Panc1 (cell line): ENCODE measurements at regions of chr5 and their contacts with region 1.

Region 1: GRCh38 chr5:164013077-164013670 is 507.8 kb downstream of the MAT2B start:
- DNase-seq: peak; percentile 55
- ATAC-seq: peak; percentile 75
- H3K4me3 ChIP-seq: no peak overlapping the region
- H3K27ac ChIP-seq: no peak overlapping the region
- H3K4me1 ChIP-seq: no peaks in the 10 kb centered on the region
- H3K27me3 ChIP-seq: no peaks in the 10 kb centered on the region
- CTCF ChIP-seq: peak; percentile 67; the same call in 1 of the 2 replicates

Region 2: DNA sequence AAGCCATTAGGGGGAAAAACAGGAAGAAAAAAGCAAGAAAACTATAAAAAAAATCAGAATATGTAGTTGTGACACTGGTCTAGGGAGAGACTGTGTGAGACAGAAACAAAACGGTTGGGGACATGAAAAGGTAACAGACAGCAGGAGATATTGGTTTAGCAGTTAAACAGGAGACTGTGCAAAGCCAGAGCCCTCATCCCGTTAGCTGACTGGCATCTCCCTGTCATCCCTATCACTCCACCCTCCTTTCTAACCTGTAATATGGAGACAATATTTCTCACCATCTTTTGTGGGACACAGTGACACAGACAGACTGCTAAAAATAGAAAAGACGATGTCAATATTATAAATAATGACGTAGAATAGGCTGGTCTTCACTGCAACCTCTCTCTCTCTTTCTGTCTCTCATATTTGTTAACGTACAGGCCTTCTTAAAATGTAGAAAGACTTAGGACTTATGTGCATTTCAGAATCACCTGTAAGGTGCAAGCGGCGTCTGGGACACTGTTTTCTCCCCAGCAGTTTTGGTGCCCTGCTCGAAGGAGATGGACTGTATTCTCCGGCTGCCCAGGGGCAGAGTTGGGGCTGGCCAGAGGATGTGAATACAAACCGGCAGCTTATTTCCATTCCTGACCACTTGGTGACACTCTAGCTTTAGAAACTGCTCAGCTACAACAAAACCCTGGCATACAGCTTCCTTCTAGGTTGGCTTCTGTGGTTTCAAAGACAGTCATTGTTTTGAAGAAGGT is 317.2 kb before region 1 on chr5:
- CTCF ChIA-PET with region 1: interaction called, 3 read pairs
- POLR2A ChIA-PET with region 1: no interaction called
- in situ Hi-C with region 1: no loop called
- intact Hi-C with region 1: loop called (anchors 5 kb)
- DNase-seq: peak; percentile 42
- ATAC-seq: peak; percentile 98
- H3K4me3 ChIP-seq: no peak overlapping the region
- H3K27ac ChIP-seq: no peak overlapping the region
- H3K4me1 ChIP-seq: no peaks in the 10 kb centered on the region
- H3K27me3 ChIP-seq: no peaks in the 10 kb centered on the region; the same call in 1 of the 2 replicates
- CTCF ChIP-seq: peak; percentile 82

Region 3: DNA sequence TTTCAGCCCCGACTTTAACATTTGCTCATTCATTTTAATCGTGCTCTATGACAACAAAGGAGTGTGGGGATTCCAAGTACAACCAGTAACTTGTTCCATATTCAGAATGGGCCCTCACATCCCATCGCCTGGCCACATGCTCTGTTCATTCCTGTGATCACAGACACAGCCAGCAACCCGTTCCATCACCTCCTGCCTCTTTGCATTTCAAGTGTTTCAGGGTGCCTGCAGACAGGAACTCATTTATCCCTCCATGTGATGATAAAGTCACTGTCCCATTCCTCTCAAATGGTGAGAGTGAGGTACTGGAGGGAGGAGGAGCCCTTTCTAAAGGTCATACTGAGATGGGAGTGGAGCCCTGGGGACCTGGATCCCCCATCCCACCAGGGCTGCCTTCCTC is 63.4 kb after region 1 on chr5:
- CTCF ChIA-PET with region 1: no interaction called
- POLR2A ChIA-PET with region 1: no interaction called
- in situ Hi-C with region 1: no loop called
- intact Hi-C with region 1: no loop called
- DNase-seq: no peak
- ATAC-seq: no peak
- H3K4me3 ChIP-seq: no peak overlapping the region
- H3K27ac ChIP-seq: no peak overlapping the region
- H3K4me1 ChIP-seq: no peaks in the 10 kb centered on the region
- H3K27me3 ChIP-seq: no peaks in the 10 kb centered on the region
- CTCF ChIP-seq: no peak

Region 4: DNA sequence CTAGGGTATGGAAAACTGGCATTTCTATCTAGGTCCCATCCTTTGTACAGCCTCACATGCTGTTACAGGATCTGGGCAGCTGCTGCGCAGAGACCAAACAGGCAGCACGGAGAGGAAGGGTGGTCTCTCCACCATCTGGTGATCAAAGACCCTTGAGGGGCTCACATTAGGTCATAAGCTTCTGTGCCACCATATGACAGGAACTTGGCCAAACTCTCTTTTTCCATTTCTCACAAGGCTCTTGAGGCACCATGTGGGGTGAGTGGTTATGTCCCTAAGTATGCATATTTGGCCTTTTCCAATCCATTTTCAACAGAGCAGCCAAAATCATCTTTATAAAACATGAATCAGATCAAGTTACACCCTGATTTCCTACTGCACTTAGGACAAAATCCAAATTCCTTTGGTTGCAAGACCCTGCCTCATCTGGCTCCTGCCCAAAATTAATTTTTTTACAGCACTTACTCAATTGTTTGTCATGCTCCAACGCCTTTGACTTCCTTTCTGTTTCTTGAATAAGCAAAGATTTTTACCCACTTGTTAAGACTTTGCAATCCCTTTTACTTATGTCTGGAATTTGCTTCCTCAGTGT is 222.2 kb after region 1 on chr5:
- CTCF ChIA-PET with region 1: no interaction called
- POLR2A ChIA-PET with region 1: no interaction called
- in situ Hi-C with region 1: no loop called
- intact Hi-C with region 1: no loop called
- DNase-seq: no peak
- ATAC-seq: no peak
- H3K4me3 ChIP-seq: no peak overlapping the region
- H3K27ac ChIP-seq: no peak overlapping the region
- H3K4me1 ChIP-seq: no peaks in the 10 kb centered on the region
- H3K27me3 ChIP-seq: no peaks in the 10 kb centered on the region
- CTCF ChIP-seq: no peak

Region 5: GRCh38 chr5:164475339-164475977 is 462.3 kb after region 1 on chr5:
- CTCF ChIA-PET with region 1: no interaction called
- POLR2A ChIA-PET with region 1: no interaction called
- in situ Hi-C with region 1: no loop called
- intact Hi-C with region 1: loop called (anchors 1 kb)
- DNase-seq: no peak
- ATAC-seq: no peak
- H3K4me3 ChIP-seq: no peak overlapping the region
- H3K27ac ChIP-seq: no peak overlapping the region
- H3K4me1 ChIP-seq: no peaks in the 10 kb centered on the region
- H3K27me3 ChIP-seq: no peaks in the 10 kb centered on the region
- CTCF ChIP-seq: peak; percentile 62; the same call in 1 of the 2 replicates

Region 6: DNA sequence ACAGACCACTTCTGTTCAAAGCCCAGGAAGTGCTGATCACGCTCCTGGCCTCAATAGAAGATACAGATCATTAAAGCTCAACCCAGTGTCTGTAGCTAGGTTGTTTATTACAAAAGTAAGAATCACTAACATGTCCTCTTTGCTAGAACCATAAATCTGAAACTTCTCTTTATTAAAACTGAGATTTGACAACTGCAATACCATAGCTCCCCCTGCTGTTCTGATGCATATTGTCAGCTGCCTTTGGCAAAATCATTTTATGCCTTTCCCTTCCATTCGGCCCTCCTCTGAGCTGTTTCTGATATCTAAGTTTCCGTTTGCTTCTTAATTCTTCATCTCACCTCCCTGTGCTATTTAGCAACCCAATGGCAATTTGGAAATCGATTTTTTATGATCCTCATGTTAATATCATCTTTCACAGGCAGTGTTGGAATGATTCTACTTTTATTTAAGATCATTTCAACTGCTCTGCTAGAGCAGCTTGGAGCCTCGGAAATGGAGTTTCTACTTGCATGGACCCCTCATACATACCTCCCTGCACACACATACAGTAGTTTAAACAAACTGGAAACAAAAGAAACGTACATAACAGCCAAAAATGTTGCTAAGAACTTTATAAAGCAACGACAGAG is 491.1 kb after region 1 on chr5:
- CTCF ChIA-PET with region 1: interaction called, 3 read pairs
- POLR2A ChIA-PET with region 1: no interaction called
- in situ Hi-C with region 1: no loop called
- intact Hi-C with region 1: loop called (anchors 2 kb)
- DNase-seq: peak; percentile 36
- ATAC-seq: 0 out of 2 replicates have a peak, but pooled peaks have one; percentile 56
- H3K4me3 ChIP-seq: no peak overlapping the region
- H3K27ac ChIP-seq: no peak overlapping the region
- H3K4me1 ChIP-seq: no peaks in the 10 kb centered on the region
- H3K27me3 ChIP-seq: no peaks in the 10 kb centered on the region
- CTCF ChIP-seq: peak; percentile 80

Region 7: DNA sequence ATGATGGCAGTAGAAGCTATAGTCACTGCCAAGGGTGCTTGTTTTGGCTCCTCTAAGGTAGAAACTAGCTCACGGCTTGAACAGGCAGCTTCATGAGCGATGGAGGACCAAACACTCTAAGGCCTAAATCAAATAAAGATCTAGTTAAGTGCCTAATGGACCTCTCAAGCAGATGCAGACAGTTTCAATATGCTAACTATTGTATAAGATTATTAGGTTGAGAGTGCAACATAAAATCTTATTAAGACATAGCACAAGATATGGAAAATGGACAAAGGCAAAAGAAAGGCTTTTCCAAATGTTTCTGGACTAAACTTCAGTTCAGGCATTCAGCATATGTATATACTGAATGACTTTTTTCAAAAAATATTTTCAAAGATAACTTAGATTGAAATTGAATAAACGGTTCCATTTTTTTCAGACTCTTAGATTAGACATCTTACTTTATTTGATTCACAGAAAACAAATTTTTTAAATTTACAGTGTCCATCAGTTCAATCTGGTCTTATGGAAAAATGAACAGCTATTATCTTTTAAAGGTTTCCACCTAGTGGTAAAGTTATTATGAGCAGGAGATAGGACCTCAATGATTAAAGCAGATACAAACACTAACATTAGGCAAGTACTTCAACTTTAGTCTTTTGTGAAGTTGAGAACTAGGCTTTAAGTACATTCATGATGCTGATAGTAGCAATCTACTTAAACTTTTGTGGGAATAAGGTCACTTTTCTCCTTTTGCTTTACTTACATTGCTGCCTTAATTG is 659.9 kb after region 1 on chr5:
- CTCF ChIA-PET with region 1: no interaction called
- POLR2A ChIA-PET with region 1: no interaction called
- in situ Hi-C with region 1: no loop called
- intact Hi-C with region 1: loop called (anchors 10 kb)
- DNase-seq: no peak
- ATAC-seq: no peak
- H3K4me3 ChIP-seq: no peak overlapping the region
- H3K27ac ChIP-seq: no peak overlapping the region
- H3K4me1 ChIP-seq: no peaks in the 10 kb centered on the region
- H3K27me3 ChIP-seq: no peaks in the 10 kb centered on the region
- CTCF ChIP-seq: peak; percentile 29; the same call in 1 of the 2 replicates

Region 8: DNA sequence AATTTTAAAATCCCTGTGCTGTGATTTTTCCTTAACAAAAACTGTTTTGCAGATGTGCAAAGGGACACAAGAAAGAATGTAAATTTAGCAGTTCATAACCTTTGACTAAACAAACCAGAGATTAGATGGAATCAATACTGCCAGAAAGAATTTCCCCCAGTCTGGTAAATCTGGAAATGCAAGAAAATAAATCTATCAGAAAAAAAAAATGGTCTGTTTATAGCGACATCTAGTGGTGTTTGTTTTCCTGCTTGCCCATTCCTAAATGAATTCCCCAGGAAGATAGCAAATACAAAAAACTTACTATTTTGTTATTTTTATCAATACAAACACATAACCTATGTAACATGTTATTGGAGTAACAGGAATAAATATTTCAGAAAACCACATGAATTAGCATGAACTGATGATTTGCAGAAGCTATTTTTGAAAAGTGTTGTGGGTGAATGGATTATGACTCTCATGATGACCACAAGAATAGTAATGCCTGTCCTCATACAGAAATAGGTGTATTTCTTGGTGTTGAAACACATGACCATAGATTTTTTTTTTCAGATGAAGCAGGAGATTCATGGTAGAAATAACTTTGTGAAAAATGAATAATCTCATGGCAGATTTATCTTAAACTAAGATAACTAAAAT is 1196.0 kb after region 1 on chr5:
- CTCF ChIA-PET with region 1: no interaction called
- POLR2A ChIA-PET with region 1: no interaction called
- in situ Hi-C with region 1: no loop called
- intact Hi-C with region 1: loop called (anchors 5 kb)
- DNase-seq: peak; percentile 12
- ATAC-seq: no peak
- H3K4me3 ChIP-seq: no peak overlapping the region
- H3K27ac ChIP-seq: no peak overlapping the region
- H3K4me1 ChIP-seq: no peaks in the 10 kb centered on the region
- H3K27me3 ChIP-seq: no peaks in the 10 kb centered on the region
- CTCF ChIP-seq: peak; percentile 77; the same call in 1 of the 2 replicates